ENCODE measurements at regions of chr7 and their contacts with region 1.

Region 1: DNA sequence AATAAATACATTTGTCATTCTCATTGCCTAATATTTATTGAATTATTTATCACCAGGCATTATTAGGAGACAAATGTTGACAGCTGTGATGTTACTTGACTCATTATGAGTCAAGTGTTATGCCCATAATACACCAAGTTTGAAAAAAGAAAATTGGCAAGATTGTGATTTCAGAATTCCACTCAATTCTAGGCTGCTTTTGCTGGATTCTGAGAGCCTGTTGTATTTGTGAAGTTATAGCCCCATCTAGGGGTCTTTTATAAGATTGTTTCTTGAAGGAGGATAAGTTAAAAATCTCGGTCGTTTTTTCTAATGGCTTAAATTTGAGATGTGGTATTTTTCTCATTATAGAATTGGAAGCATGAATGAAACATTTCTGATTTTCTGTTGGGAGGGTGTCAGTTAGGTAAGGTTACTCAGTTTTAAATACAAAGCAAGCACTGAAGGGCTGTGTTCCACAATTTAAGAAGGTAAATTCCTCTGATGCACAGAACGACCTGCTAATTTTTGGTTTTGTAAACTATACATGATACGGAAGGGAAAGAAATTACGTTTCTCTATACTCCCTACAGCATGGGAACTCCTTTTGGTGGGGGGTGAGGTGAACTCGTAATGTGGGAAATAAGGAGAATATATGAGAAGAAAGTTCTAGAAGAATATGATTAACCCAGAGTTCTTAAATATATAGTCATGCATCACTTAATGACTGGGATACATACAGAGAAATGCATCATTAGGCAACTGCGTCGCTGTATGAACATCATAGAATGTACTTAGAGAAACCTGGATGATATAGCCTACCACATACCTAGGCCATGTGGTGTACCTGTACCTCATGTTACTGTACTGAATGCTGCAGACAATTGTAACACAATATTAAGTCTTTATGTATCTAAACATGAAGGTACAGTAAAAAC is 2.6 kb downstream of the STK31 start:
- DNase-seq: peak; percentile 81
- ATAC-seq: peak; percentile 30
- H3K4me3 ChIP-seq: peak overlapping the region; percentile 46; the same call in 1 of the 2 replicates
- H3K27ac ChIP-seq: no peak overlapping the region
- H3K4me1 ChIP-seq: peaks cover 32% of the 10 kb centered on the region
- H3K27me3 ChIP-seq: no peaks in the 10 kb centered on the region
- CTCF ChIP-seq: peak; percentile 82

Region 2: DNA sequence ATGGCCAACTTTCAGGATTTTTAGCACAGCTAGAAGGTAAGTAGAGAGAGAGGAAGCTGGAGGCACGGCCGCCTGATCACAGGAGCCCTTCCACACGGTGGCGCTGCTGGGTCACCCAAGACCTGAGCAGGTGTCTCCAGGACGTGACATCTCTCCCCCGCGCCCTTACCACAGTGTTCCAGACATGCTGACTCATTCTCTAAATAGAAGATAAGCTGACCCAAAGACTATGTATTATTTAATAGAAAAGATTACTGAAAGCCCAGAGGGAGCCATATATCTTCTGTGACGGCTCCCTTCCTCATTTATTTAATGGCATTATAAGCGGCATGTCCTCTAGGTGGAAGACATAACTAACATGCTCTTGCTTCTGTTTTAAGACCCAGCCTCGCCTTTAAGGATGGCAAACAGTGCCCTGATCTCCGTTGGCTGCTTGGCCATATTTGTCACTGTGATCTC is 439.5 kb before region 1 on chr7:
- CTCF ChIA-PET with region 1: interaction called, 9 read pairs
- POLR2A ChIA-PET with region 1: no interaction called
- intact Hi-C with region 1: loop called (anchors 1 kb)
- DNase-seq: peak; percentile 96
- ATAC-seq: peak; percentile 94
- H3K4me3 ChIP-seq: peak overlapping the region; percentile 29; the same call in 1 of the 2 replicates
- H3K27ac ChIP-seq: peak overlapping the region; percentile 40
- H3K4me1 ChIP-seq: peaks cover 9% of the 10 kb centered on the region
- H3K27me3 ChIP-seq: no peaks in the 10 kb centered on the region
- CTCF ChIP-seq: peak; percentile 90

Region 3: DNA sequence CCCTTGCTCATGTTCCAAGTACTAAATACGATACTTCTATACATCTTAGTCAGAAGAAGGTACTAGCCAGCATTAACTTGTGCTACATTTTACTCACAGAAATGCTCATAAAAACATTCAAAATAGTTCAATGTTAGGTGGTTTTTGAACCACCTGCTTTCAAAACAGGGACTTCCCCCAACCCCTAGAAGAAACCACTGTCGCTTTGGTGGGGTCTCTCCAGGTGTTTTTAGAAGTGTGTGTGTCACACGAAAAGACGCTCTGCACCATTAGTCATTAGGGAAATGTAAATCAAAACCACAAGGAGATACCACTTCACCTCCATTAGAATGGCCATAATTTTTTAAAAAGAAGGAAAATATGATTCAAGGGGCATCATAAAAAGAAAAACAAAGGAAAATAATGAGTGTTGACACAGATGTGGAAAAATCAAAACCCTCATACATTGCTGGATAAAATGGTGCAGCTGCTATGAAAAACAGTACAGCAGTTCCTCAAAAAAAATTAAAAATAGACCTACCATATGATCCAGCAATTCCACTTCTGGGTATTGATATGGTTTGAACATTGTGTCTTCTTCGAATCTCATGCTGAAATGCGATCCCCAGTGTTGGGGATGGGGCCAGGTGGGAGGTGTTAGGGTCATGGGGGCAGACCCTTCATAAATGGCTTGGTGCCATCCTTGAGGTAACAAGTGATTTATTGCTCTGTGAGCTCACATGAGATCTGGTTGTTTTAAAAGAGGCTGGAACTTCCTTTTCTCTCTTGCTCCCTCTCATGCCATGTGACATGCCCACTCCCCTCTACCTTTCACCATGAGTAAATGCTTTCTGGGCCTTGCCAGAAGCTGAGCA is 339.2 kb before region 1 on chr7:
- CTCF ChIA-PET with region 1: no interaction called
- POLR2A ChIA-PET with region 1: interaction called, 16 read pairs
- intact Hi-C with region 1: no loop called
- DNase-seq: peak; percentile 17
- ATAC-seq: peak; percentile 39; the same call in 1 of the 2 replicates
- H3K4me3 ChIP-seq: no peak overlapping the region
- H3K27ac ChIP-seq: no peak overlapping the region; the same call in 1 of the 2 replicates
- H3K4me1 ChIP-seq: peaks cover 26% of the 10 kb centered on the region
- H3K27me3 ChIP-seq: no peaks in the 10 kb centered on the region
- CTCF ChIP-seq: no peak

Region 4: DNA sequence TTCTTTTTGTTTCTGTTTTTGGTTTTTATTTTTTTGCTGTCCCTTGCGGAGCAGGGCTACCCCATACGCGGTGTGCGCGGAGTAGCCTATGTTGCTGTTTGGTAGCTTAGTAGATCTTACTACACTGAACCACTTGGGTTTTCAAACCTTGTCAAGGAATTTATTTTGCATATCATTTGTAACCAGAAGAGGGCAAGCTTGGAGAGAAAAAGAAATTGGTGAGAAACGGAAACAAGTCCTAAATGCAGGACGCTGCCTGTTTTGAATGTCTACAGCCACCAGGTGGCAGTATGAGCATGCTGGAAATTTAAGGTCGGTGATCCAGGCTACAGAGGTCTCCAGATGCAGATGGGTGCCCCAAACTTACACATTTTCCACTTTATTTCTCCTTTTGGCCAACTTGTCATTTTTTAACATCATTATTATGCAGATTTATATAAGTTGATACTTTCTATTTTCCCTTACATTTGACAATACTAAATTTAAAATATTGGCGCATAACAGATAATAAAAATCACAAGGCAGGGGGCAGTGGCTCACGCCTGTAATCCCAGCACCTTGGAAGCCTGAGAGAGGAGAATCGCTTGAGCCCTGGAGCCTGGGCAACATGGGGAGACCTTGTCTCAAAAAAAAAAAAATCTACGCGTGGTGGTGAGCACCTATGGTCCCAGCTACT is 165.6 kb before region 1 on chr7:
- CTCF ChIA-PET with region 1: interaction called, 11 read pairs
- POLR2A ChIA-PET with region 1: interaction called, 3 read pairs
- intact Hi-C with region 1: loop called (anchors 1 kb)
- DNase-seq: peak; percentile 94
- ATAC-seq: peak; percentile 81
- H3K4me3 ChIP-seq: no peak overlapping the region
- H3K27ac ChIP-seq: no peak overlapping the region
- H3K4me1 ChIP-seq: no peaks in the 10 kb centered on the region
- H3K27me3 ChIP-seq: no peaks in the 10 kb centered on the region
- CTCF ChIP-seq: peak; percentile 92

Region 5: GRCh38 chr7:23597094-23598091 is 115.2 kb before region 1 on chr7 and contains the start of gene CCDC126:
- CTCF ChIA-PET with region 1: no interaction called
- POLR2A ChIA-PET with region 1: interaction called, 4 read pairs
- intact Hi-C with region 1: loop called (anchors 1 kb)
- DNase-seq: peak; percentile 91
- ATAC-seq: peak; percentile 93
- H3K4me3 ChIP-seq: peak within 1 kb of the TSS; percentile 75
- H3K27ac ChIP-seq: peak within 1 kb of the TSS; percentile 37; the same call in 1 of the 2 replicates
- H3K4me1 ChIP-seq: peaks cover 24% of the 10 kb centered on the region
- H3K27me3 ChIP-seq: no peaks in the 10 kb centered on the region
- CTCF ChIP-seq: no peak
- total RNA-seq, gene CCDC126: 3.2 and 5.6 TPM in 2 replicates

Region 6: GRCh38 chr7:23607866-23608265 is 104.8 kb before region 1 on chr7:
- CTCF ChIA-PET with region 1: no interaction called
- POLR2A ChIA-PET with region 1: no interaction called
- intact Hi-C with region 1: no loop called
- DNase-seq: no peak
- ATAC-seq: no peak
- H3K4me3 ChIP-seq: no peak overlapping the region
- H3K27ac ChIP-seq: no peak overlapping the region
- H3K4me1 ChIP-seq: no peaks in the 10 kb centered on the region
- H3K27me3 ChIP-seq: no peaks in the 10 kb centered on the region
- CTCF ChIP-seq: no peak

Region 7: GRCh38 chr7:23618241-23618640 is 94.4 kb before region 1 on chr7:
- CTCF ChIA-PET with region 1: no interaction called
- POLR2A ChIA-PET with region 1: no interaction called
- intact Hi-C with region 1: no loop called
- DNase-seq: peak; percentile 22
- ATAC-seq: no peak
- H3K4me3 ChIP-seq: no peak overlapping the region
- H3K27ac ChIP-seq: no peak overlapping the region
- H3K4me1 ChIP-seq: no peaks in the 10 kb centered on the region
- H3K27me3 ChIP-seq: no peaks in the 10 kb centered on the region
- CTCF ChIP-seq: no peak

Region 8: DNA sequence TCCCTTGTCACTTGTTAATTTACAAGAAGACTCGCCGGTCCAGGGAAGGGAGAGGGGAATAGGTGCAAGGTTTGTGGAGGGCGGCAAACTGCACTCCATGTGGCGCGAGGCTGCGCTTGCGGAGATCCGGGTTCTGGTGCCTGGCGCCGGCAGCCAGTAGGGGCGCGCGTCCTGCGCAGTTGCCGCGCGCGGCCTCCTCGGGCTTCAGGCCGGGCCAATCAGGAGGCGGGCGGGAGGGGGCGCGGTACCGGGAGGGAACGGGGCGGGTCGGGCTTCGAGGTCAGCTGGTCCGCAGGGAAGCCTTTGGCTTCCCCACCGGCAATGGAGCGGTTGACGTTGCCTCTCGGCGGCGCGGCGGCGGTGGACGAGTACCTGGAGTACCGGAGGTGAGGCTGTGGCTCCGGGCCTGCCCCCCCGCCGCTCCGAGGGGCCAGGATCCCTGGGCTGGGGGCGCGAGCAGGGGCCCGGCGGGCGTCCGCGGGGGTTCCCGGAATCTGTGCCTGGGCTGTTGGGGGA is 32.7 kb before region 1 on chr7 and contains the start of gene FAM221A:
- CTCF ChIA-PET with region 1: interaction called, 3 read pairs
- POLR2A ChIA-PET with region 1: no interaction called
- intact Hi-C with region 1: loop called (anchors 2 kb)
- DNase-seq: peak; percentile 81
- ATAC-seq: peak; percentile 93
- H3K4me3 ChIP-seq: peak within 1 kb of the TSS; percentile 76
- H3K27ac ChIP-seq: no peak within 1 kb of the TSS
- H3K4me1 ChIP-seq: peaks cover 3% of the 10 kb centered on the region; the same call in 1 of the 2 replicates
- H3K27me3 ChIP-seq: no peaks in the 10 kb centered on the region
- CTCF ChIP-seq: peak; percentile 63
- total RNA-seq, gene FAM221A: 0.75 and 5.6 TPM in 2 replicates

Region 9: DNA sequence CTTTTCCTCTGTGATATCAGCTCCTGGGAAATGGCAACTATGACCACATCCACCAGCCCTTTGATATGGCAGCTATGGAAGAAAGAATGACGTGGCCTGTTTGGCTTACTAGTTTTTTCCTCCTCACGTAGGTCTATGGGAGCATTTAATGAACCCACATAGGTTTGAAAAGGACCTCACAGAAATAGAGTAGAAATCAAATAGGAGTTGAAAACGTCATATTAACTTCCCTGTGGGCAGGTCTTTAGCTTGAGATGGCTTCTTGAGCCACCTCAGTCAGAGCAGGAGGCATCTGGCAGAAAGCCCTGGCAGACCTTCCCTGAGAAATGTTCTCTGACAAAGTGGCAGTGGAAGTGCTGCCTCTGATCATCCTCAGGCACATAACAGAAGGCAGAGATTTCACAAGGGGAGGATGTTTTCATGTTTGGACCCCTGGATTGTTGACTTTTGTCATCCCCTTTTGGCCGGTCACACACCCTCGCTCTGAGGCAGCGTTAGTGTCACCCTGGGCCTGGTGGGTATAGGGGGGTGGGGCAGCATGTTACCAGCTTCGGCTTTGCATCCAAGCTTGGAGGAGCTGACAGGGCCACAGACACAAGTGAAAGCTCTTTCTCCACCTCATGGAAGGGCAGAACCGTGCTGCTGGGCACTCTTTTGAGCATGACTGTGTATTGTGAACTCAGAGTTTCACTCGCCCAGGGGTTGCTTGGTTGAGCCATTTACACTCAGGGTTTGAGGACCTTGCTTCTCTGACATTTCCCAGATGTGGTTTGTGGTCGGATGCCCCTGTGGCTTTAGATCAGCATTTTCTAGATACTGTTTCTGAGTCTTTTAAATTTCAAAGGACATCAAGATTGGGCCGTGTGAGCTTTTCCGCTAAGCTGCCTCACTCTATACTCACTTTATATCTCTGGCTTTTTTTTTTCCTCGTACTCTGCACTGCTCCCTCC is 181.6 kb after region 1 on chr7:
- CTCF ChIA-PET with region 1: no interaction called
- POLR2A ChIA-PET with region 1: no interaction called
- intact Hi-C with region 1: no loop called
- DNase-seq: no peak
- ATAC-seq: no peak
- H3K4me3 ChIP-seq: no peak overlapping the region
- H3K27ac ChIP-seq: no peak overlapping the region
- H3K4me1 ChIP-seq: peaks cover 20% of the 10 kb centered on the region
- H3K27me3 ChIP-seq: no peaks in the 10 kb centered on the region
- CTCF ChIP-seq: no peak

Region 10: DNA sequence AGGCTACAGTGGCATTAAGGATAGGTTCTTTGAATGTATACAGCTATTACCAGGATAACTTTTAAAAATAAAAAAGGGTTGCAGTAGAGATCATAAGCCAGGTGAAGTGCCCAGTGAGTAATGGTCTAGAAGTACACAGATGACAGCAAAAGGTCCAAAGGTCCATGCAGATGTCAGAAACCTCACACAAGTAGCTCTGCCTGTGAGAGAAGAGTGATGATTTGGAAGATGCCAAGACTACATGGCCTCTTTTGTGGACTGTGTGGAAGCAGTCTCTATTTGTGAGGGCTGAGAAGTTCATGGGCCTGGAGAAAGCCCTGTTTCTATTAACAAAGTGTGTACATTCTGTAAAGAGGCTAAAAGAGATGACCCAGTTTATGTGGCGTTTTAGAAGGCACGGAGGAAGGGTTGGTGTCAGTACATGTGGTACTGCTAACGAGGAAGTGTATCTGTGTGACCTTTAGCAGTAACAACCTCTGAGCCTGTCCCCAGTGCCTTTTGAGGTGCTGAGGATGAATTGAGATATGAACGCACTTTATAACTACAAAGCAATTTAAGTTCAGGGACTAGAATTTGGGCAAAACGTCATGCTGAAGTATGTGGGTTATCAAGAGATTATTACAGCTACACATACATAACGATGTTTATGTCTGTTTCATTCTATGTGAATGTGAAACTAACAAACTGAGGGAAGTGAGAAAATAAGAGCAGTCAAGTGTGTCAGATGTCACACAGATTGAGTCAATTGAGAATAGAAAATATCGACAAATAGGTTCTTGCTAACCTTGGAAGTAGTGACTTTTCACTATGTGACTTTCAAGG is 1404.8 kb after region 1 on chr7:
- CTCF ChIA-PET with region 1: no interaction called
- POLR2A ChIA-PET with region 1: interaction called, 13 read pairs
- intact Hi-C with region 1: no loop called
- DNase-seq: no peak
- ATAC-seq: no peak
- H3K4me3 ChIP-seq: no peak overlapping the region
- H3K27ac ChIP-seq: no peak overlapping the region
- H3K4me1 ChIP-seq: no peaks in the 10 kb centered on the region
- H3K27me3 ChIP-seq: no peaks in the 10 kb centered on the region
- CTCF ChIP-seq: no peak

Measured in PC-3 (cell line).